Mammary epithelial cell (primary cell): ENCODE measurements at regions of chr19 and their contacts with region 1.

Region 1: DNA sequence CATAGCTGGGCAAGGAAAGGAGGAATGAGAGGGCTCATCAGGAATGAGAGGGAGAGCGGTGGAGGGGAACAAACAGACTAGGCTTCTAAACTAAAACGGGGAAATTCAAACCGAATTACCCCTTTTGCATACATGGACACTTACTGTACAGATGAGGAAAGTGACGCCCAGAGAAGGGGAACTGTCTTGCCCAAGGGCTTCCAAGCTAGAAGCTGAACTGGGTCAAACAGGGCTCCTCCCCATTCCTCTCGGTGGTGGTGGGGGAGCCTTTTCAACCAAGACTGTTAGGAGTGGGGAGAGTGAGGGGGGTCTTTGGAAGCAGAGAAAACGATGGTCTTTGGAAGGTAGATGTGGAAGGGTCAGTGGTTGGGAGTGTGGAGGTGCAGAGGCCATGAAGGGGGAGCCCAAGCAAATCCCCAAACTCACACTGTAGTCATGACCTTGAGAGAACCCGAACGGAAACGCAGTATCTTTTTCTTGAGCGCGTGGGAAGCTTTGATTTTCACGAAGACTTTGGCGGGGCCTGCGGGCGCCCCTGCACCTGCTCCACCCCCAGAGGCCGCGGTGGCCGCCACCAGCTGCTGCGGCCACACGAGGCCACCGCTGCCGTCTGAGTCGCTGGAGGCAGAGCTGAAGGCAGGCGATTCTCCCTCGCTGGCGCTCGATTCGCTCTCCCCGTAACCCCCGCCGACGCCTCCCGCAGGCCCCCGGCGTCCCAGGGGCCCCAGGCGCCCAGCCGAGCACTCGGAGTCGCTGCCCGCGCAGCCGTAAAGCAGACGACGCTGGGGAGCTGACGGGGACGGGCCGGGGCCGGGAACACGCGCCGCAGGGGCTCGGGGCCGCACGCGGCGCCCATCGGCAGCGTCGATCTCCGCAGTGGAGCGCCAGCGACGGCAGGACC is 12.3 kb upstream of the GNG8 start:
- DNase-seq: no peak
- H3K4me3 ChIP-seq: no peak overlapping the region
- H3K27ac ChIP-seq: no peak overlapping the region
- H3K4me1 ChIP-seq: no peaks in the 10 kb centered on the region
- H3K27me3 ChIP-seq: peaks cover 18% of the 10 kb centered on the region
- CTCF ChIP-seq: no peak

Region 2: GRCh38 chr19:46692918-46693722 is 44.8 kb after region 1 on chr19:
- CTCF ChIA-PET with region 1: no interaction called
- dilution Hi-C with region 1: loop called (anchors 5 kb)
- in situ Hi-C with region 1: no loop called
- intact Hi-C with region 1: no loop called
- DNase-seq: peak; percentile 36
- H3K4me3 ChIP-seq: no peak overlapping the region
- H3K27ac ChIP-seq: no peak overlapping the region
- H3K4me1 ChIP-seq: no peaks in the 10 kb centered on the region
- H3K27me3 ChIP-seq: no peaks in the 10 kb centered on the region
- CTCF ChIP-seq: no peak

Region 3: GRCh38 chr19:46728693-46729676 is 80.7 kb after region 1 on chr19:
- CTCF ChIA-PET with region 1: no interaction called
- dilution Hi-C with region 1: no loop called
- in situ Hi-C with region 1: no loop called
- intact Hi-C with region 1: no loop called
- DNase-seq: no peak
- H3K4me3 ChIP-seq: no peak overlapping the region
- H3K27ac ChIP-seq: no peak overlapping the region
- H3K4me1 ChIP-seq: peaks cover 26% of the 10 kb centered on the region
- H3K27me3 ChIP-seq: no peaks in the 10 kb centered on the region
- CTCF ChIP-seq: peak; percentile 72 to 93